Esophagus muscularis mucosa (tissue), 4 donors: ENCODE measurements at regions of chr9 and their contacts with region 1.

Region 1: DNA sequence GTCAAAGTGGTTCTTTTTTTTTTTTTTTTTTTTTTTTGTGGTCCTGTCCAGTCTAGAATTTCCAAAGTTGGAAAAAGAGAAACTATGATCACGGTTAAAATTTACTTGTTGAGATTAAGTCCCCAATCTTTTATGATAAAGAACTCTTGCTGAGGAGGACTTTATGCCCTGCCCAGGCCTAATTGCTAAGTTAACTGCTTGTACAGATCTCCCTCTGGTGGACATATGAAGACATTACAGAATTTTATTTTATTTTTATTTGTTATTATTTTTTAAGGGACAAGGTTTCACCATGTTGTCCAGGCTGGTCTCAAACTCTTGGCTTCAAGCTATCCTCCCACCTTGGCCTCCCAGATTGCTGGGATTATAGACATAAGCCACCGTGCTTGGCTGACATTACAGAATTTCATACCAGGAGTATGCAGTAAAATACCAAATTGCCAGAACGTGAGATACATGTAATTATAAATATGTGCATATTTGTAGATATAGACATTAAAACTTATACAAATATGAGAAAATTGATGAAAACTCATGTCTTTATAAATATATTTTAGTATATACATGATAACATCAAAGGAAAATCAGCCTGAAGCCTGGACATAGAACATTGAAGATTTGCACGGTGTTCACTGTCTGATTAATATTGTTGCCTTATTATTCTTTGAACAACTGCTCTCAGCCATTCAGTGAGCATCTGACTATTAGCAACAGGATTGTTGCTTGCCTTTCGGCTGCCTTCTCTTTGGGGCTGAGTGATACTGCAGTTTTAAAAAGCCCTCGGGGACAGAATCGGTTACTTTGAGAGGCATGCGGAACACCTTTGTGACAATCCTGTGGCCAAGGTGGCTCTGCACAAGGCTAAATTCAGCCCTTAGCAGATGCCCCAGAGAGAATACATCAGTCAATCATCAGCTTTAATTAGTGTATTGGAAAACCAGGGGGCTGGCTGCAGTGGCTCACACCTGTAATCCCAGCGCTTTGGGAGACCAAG is 91.0 kb downstream of the RFK start:
- DNase-seq: no peak
- H3K4me3 ChIP-seq: no peak overlapping the region
- H3K27ac ChIP-seq: no peak overlapping the region
- H3K4me1 ChIP-seq: peaks cover 0 to 9% (median 6%) of the 10 kb centered on the region in 4 donors
- H3K27me3 ChIP-seq: no peaks in the 10 kb centered on the region
- CTCF ChIP-seq: peak; percentile 63 to 78 (median 72)
- EP300 ChIP-seq: no peak
- POLR2A ChIP-seq: no peak

Region 2: DNA sequence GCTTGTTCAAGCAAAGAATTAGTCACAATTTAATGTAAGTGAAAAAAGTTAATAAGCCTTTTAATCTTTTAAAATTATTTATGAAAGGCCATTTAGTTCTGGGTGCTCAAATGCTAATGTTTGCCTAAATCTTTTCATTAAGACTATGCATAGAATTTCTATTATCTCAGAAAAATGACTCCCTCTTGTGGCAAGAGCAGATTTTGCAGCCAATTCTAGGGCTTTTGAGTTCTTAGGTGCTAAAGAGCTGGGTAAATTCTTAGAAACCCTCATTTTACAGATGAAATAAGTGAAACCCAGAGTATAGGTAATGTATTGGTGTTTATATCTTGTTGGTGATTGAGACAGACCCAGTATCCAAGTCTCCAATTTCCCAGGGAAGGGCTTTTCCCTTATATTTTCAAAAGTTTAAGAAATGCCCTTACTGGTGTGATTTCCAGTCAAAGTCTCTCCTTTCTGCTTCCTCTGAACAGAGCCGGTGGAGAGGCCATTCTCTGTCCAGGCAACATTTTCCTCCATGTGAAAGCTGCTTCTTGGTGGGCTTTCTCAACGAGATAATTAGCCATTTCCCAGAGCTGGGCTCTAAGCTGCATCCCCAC is 436.9 kb before region 1 on chr9:
- intact Hi-C with region 1: loop called (anchors 2 kb)
- DNase-seq: peak; percentile 89
- H3K4me3 ChIP-seq: no peak overlapping the region
- H3K27ac ChIP-seq: no peak overlapping the region
- H3K4me1 ChIP-seq: no peaks in the 10 kb centered on the region
- H3K27me3 ChIP-seq: no peaks in the 10 kb centered on the region
- CTCF ChIP-seq: peak; percentile 67 to 83 (median 69)
- EP300 ChIP-seq: no peak
- POLR2A ChIP-seq: no peak